K562 (cell line): ENCODE measurements at regions of chr19 and their contacts with region 1.

Region 1: GRCh38 chr19:2385053-2385721 is 25.1 kb downstream of the TMPRSS9 start:
- DNase-seq: peak; percentile 77 to 95 (median 94)
- ATAC-seq: peak; percentile 80
- H3K4me3 ChIP-seq: peak overlapping the region; percentile 38
- H3K27ac ChIP-seq: peak overlapping the region; percentile 65; the same call in 2 of the 3 replicates
- H3K4me1 ChIP-seq: peaks cover 6 to 21% of the 10 kb centered on the region in 2 experiments; a peak in 4 of 5 replicates
- H3K27me3 ChIP-seq: no peaks in the 10 kb centered on the region
- CTCF ChIP-seq: no peak
- EP300 ChIP-seq: no peak
- POLR2A ChIP-seq: no peak; the same call in 1 of the 2 replicates
- RAD21 ChIP-seq: peak in 1 of 2 experiments; percentile 20; a peak in 1 of 4 replicates

Region 2: GRCh38 chr19:1624458-1624857 is 760.7 kb before region 1 on chr19:
- CTCF ChIA-PET with region 1: no interaction called
- POLR2A ChIA-PET with region 1: no interaction called
- in situ Hi-C with region 1: no loop called
- intact Hi-C with region 1: no loop called
- DNase-seq: peak; percentile 69 to 84 (median 77)
- ATAC-seq: peak; percentile 99
- H3K4me3 ChIP-seq: no peak overlapping the region
- H3K27ac ChIP-seq: peak overlapping the region; percentile 61; the same call in 1 of the 3 replicates
- H3K4me1 ChIP-seq: peaks cover 0 to 60% of the 10 kb centered on the region in 2 experiments; a peak in 2 of 5 replicates
- H3K27me3 ChIP-seq: no peaks in the 10 kb centered on the region
- CTCF ChIP-seq: peak; percentile 90 to 94 (median 93)
- EP300 ChIP-seq: no peak
- POLR2A ChIP-seq: no peak
- RAD21 ChIP-seq: peak; percentile 36 to 69; a peak in 3 of 4 replicates

Region 3: DNA sequence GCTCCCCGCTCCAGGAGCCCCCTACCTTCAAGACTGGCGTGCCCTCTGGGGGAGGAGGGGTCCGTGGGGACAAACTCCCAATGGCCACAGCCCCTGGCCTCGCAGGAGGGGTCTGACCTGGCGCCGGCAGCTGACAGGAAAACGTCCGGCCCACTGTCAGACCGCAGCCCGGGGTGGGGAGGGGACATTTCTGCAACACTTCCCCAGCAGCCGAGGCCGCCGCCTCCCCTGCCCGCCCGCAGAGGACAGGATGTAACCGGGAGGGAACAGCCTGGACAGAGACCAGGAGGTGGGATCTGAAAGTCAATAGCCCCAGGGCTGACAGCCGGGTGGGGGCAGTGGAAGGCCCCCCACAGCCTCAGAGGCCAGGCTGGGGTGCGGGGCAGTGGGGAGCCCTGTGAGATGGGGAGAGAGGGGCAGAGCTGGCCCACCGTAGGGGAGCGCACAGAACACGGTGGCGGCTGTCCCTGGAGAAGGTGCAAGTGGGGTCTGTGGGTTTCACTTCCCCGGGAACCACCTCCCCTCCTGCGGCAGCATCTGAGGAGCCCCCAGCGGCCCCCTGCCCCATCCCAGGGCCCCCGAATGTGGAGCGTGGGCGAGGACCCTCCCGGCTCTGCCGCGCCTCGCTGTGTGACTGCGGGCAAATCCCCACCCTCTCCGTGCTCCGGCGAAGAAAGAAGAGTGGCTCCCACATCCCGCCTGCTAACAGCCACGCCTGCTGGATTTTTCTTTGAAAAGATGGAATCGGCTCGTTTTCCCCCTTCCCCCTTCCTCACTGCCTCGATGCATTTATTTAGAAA is 102.9 kb before region 1 on chr19 and contains the start of gene PEAK3:
- CTCF ChIA-PET with region 1: no interaction called
- POLR2A ChIA-PET with region 1: interaction called, 4 read pairs
- in situ Hi-C with region 1: loop called (anchors 5 kb)
- intact Hi-C with region 1: no loop called
- DNase-seq: peak; percentile 56 to 75 (median 64)
- ATAC-seq: peak; percentile 86
- H3K4me3 ChIP-seq: peak within 1 kb of the TSS; percentile 11; the same call in 1 of the 2 replicates
- H3K27ac ChIP-seq: peak within 1 kb of the TSS; percentile 10; the same call in 1 of the 3 replicates
- H3K4me1 ChIP-seq: peaks cover 0 to 27% of the 10 kb centered on the region in 2 experiments; a peak in 3 of 5 replicates
- H3K27me3 ChIP-seq: no peaks in the 10 kb centered on the region
- CTCF ChIP-seq: no peak
- EP300 ChIP-seq: no peak
- POLR2A ChIP-seq: no peak
- RAD21 ChIP-seq: 0 out of 4 replicates have a peak, but pooled peaks of 1 of the 2 experiments have one; percentile 15
- polyA plus RNA-seq, gene PEAK3: not detected

Region 4: DNA sequence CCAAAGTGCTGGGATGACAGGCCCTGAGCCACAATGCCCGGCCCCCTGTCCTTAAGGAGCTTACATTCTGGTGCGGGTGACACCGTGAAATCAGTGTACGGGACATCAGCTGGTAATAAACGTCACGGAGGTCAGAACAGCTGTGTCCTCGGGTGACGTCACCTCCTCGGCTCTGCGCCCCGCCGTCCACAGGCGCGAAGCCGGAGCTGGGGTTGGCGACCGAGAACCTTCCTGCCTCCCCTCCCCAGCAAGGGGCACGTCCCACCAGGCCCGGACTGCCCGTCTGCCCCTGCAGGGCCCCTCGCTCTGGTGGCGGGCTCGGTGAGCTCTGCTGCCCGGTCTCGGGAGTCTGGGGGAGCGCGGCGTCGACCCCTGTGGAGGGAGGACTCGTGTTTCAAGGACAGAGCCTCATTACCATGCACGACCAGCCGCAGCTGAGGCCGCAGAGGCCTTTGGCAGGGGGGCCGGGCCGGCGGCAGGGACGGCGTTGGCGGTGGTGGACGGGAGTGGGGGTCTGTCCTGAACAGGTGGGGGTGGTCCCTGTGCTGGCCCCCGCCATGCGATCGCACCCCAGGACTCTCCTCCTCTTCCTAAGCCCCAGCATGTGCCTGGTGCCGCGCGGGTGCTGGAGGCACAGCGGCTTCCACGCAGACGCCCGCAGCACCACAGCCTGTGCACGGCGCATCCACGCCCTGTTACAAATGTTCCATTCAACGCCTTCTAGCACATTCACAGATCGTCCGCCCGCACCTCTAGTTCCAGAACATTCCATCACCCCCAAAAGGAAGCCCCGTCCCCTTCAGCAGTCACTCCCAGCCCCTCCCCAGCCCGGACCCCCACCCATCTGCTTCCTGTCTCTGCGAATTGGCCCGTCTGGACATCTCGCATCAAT is 82.6 kb before region 1 on chr19:
- CTCF ChIA-PET with region 1: no interaction called
- POLR2A ChIA-PET with region 1: no interaction called
- in situ Hi-C with region 1: no loop called
- intact Hi-C with region 1: no loop called
- DNase-seq: peak; percentile 42 to 65 (median 51)
- ATAC-seq: peak; percentile 55
- H3K4me3 ChIP-seq: no peak overlapping the region
- H3K27ac ChIP-seq: no peak overlapping the region
- H3K4me1 ChIP-seq: peaks cover 6 to 46% of the 10 kb centered on the region in 2 experiments; a peak in 4 of 5 replicates
- H3K27me3 ChIP-seq: peaks cover 0 to 13% of the 10 kb centered on the region in 2 experiments; a peak in 2 of 5 replicates
- CTCF ChIP-seq: no peak
- EP300 ChIP-seq: no peak
- POLR2A ChIP-seq: no peak
- RAD21 ChIP-seq: no peak

Region 5: GRCh38 chr19:2328401-2329148 is 56.6 kb before region 1 on chr19 and contains the starts of genes LSM7 and SPPL2B:
- CTCF ChIA-PET with region 1: no interaction called
- POLR2A ChIA-PET with region 1: no interaction called
- in situ Hi-C with region 1: no loop called
- intact Hi-C with region 1: loop called (anchors 10 kb)
- DNase-seq: peak; percentile 95 to 99 (median 97)
- ATAC-seq: peak; percentile 86
- H3K4me3 ChIP-seq: peak within 1 kb of the TSS; percentile 98
- H3K27ac ChIP-seq: peak within 1 kb of the TSS; percentile 74
- H3K4me1 ChIP-seq: peaks cover 28 to 73% of the 10 kb centered on the region in 2 experiments; a peak in 4 of 5 replicates
- H3K27me3 ChIP-seq: no peaks in the 10 kb centered on the region
- CTCF ChIP-seq: no peak
- EP300 ChIP-seq: no peak
- POLR2A ChIP-seq: peak; percentile 91
- RAD21 ChIP-seq: peak in 1 of 2 experiments; percentile 3; a peak in 1 of 4 replicates
- polyA plus RNA-seq, gene LSM7: 40.5 to 147 TPM
- polyA plus RNA-seq, gene SPPL2B: 0.20 to 0.29 TPM